ENCODE measurements at regions of chr2 and their contacts with region 1.

Region 1: DNA sequence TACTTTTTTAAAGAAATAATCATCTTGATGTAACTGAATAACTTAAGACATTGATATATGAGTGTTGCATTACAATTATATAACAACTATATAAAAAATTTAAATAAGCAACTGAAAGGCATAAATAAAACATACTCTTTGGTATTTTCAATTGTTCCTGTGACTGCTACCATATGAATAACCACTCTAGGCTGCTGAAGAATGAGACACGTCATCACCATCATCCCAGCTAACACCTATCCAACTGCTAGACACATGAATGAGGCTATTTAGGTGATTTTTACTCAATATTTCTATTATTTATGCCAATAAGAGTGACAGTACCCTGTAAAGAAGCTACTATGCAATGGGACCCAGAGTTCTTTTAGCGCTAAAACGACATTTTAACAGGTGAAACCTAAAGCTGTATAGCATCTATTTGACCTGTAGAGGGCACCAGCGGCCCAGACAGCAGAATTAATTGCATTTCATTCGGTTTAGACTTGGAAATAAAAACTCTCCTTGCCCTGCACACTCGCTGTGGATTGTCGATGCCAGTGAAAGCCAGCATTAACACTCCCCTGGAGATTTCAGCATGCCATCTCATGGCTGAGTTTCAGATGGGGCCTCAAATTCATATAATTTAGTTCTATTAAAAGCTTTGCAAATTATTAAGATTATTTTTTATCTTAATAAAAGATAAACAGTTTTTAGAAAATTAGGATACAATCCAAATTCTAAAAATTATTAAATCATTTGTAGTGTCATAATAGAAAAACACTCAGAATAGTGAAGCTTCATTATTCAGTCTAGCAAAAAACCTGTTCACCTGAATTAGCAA is 89.4 kb upstream of the MAP2 start:
- DNase-seq: peak; percentile 40
- H3K4me3 ChIP-seq: no peak overlapping the region
- H3K27ac ChIP-seq: no peak overlapping the region
- H3K4me1 ChIP-seq: no peaks in the 10 kb centered on the region
- H3K27me3 ChIP-seq: no peaks in the 10 kb centered on the region
- CTCF ChIP-seq: peak; percentile 57 to 77 (median 75)
- POLR2A ChIP-seq: no peak

Region 2: GRCh38 chr2:208392300-208393080 is 941.9 kb before region 1 on chr2:
- intact Hi-C with region 1: loop called (anchors 10 kb)
- DNase-seq: no peak
- H3K4me3 ChIP-seq: no peak overlapping the region
- H3K27ac ChIP-seq: no peak overlapping the region
- H3K4me1 ChIP-seq: no peaks in the 10 kb centered on the region
- H3K27me3 ChIP-seq: no peaks in the 10 kb centered on the region
- CTCF ChIP-seq: no peak
- POLR2A ChIP-seq: no peak

Region 3: DNA sequence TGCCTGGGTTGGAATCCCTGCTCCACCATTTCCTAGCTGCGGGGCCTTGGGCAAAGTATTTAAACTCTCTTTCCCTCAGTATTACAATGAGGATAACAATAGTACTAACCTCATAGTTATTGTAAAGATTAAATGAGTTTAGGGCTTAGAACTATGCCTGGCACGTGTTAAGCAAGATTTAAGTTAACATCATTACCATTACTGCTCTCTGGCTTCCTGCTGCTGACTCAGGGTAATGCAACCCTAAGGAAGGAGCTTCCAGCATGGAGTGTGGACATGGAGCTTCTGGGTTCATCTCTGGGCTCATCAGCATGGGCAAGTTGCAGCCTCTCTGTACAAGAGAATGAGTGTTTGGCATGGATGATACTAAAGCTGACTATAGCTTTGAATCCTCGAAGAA is 284.8 kb before region 1 on chr2:
- intact Hi-C with region 1: no loop called
- DNase-seq: no peak
- H3K4me3 ChIP-seq: no peak overlapping the region
- H3K27ac ChIP-seq: no peak overlapping the region
- H3K4me1 ChIP-seq: no peaks in the 10 kb centered on the region
- H3K27me3 ChIP-seq: no peaks in the 10 kb centered on the region
- CTCF ChIP-seq: no peak
- POLR2A ChIP-seq: no peak

Region 4: DNA sequence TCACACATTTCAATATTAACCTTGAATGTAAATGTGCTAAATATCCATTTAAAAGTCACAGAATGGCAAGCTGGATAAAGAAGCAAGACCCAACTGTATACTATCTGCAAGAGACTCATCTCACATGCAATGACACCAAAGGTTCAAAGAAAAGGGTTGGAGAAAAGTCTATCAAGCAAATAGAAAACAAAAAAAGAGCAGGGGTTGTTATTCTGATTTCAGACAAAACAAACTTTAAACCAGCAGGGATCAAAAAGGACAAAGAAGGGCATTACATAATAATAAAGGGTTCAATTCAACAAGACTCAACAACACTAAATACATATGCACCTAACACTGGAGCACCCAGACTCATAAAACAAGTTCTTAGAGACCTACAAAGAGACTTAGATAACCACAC is 422.8 kb after region 1 on chr2:
- intact Hi-C with region 1: no loop called
- DNase-seq: no peak
- H3K4me3 ChIP-seq: no peak overlapping the region
- H3K27ac ChIP-seq: no peak overlapping the region
- H3K4me1 ChIP-seq: no peaks in the 10 kb centered on the region
- H3K27me3 ChIP-seq: no peaks in the 10 kb centered on the region
- CTCF ChIP-seq: no peak
- POLR2A ChIP-seq: no peak